Activated CD4-positive, alpha-beta memory T cell treated with anti-CD3 and anti-CD28 coated beads for 36 hours (primary cell): ENCODE measurements at regions of chr2 and their contacts with region 1.

Region 1: GRCh38 chr2:208040199-208041171 is 15.2 kb upstream of the PLEKHM3 start:
- DNase-seq: peak; percentile 88
- H3K4me3 Mint-ChIP-seq: no peak overlapping the region
- H3K27ac Mint-ChIP-seq: no peak overlapping the region
- H3K4me1 Mint-ChIP-seq: peaks cover 4% of the 10 kb centered on the region
- H3K27me3 Mint-ChIP-seq: peaks cover 5% of the 10 kb centered on the region

Region 2: DNA sequence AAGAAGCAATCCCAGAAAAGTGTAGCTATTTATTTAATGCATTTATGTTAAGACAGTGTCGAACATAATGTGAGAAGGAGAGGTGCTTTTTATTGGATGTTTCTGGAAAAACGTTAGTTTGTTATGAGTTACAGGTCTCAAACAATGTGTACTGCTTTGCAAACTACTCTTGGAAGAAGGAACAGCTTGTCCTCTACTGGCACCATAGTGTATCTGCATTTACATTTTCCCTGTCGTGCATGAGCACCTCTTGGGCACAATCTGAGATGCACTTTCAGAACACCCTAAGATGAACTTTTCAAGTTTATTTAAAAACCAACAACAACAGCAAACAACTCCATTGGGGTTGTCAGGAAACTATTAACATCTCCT is 306.2 kb before region 1 on chr2:
- CTCF ChIA-PET with region 1: interaction called, 11 read pairs
- POLR2A ChIA-PET with region 1: interaction called, 3 read pairs
- intact Hi-C with region 1: no loop called
- DNase-seq: no peak
- H3K4me3 Mint-ChIP-seq: no peak overlapping the region
- H3K27ac Mint-ChIP-seq: no peak overlapping the region
- H3K4me1 Mint-ChIP-seq: peaks cover 4% of the 10 kb centered on the region
- H3K27me3 Mint-ChIP-seq: no peaks in the 10 kb centered on the region

Region 3: GRCh38 chr2:207769597-207770486 is 270.6 kb before region 1 on chr2 and contains the start of gene FZD5:
- CTCF ChIA-PET with region 1: interaction called, 17 read pairs
- POLR2A ChIA-PET with region 1: no interaction called
- intact Hi-C with region 1: loop called (anchors 1 kb)
- DNase-seq: peak; percentile 92
- H3K4me3 Mint-ChIP-seq: peak within 1 kb of the TSS; percentile 78
- H3K27ac Mint-ChIP-seq: no peak within 1 kb of the TSS
- H3K4me1 Mint-ChIP-seq: peaks cover 31% of the 10 kb centered on the region
- H3K27me3 Mint-ChIP-seq: peaks cover 30% of the 10 kb centered on the region
- total RNA-seq, gene FZD5: 1.3 to 1.7 TPM

Region 4: DNA sequence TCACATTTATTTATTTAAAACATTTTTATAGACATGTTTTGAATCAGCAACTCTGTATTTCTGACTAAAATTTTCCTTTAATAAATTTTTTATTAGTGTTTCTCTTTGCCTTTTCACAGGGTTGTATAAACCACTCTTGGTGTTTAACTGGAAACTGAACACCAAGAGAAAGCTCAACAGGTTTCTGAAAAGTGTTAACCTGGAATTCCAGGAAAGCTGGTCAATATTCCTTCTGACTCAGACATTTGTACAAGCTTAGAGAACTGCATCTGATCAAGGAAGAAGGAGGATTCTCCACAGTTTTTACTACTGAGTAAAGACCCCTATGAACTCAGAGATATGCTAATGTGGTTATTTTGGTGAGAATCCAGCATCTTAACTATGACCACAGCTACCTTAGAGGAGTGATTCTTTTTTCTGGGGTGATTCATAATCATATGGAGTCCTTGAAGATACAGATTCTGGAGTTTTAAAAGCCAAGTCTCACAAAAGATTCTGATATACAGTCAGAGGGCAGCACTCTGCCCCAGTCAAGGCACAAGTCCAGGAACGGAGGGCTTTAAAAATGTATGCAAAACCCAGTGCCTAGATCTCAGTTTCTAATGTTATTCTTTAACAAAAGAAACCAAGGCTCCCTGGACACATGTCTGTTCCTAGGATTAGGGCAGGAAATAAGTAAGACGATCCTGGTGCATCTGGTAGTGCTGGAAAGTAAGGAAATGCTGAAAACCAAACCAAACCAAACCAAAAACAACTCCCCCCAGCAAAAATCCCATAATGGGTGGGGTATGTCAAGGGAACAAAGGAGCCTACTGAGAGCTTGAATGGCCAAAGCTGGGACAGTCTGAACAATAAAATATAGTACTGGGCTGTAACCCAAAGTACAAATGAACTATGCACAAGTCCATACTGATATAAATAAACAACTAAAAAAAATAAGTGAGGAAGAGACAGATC is 185.7 kb before region 1 on chr2:
- CTCF ChIA-PET with region 1: no interaction called
- POLR2A ChIA-PET with region 1: no interaction called
- intact Hi-C with region 1: no loop called
- DNase-seq: no peak
- H3K4me3 Mint-ChIP-seq: no peak overlapping the region
- H3K27ac Mint-ChIP-seq: no peak overlapping the region
- H3K4me1 Mint-ChIP-seq: no peaks in the 10 kb centered on the region
- H3K27me3 Mint-ChIP-seq: no peaks in the 10 kb centered on the region

Region 5: GRCh38 chr2:208025037-208025813 is 15.3 kb before region 1 on chr2 and contains the start of gene PLEKHM3:
- CTCF ChIA-PET with region 1: interaction called, 25 read pairs
- POLR2A ChIA-PET with region 1: no interaction called
- intact Hi-C with region 1: loop called (anchors 1 kb)
- DNase-seq: peak; percentile 86
- H3K4me3 Mint-ChIP-seq: peak within 1 kb of the TSS; percentile 90
- H3K27ac Mint-ChIP-seq: peak within 1 kb of the TSS; percentile 90
- H3K4me1 Mint-ChIP-seq: peaks cover 14% of the 10 kb centered on the region
- H3K27me3 Mint-ChIP-seq: no peaks in the 10 kb centered on the region
- total RNA-seq, gene PLEKHM3: 4.5 to 5.5 TPM